ENCODE measurements at regions of chr17 and their contacts with region 1.

Region 1: DNA sequence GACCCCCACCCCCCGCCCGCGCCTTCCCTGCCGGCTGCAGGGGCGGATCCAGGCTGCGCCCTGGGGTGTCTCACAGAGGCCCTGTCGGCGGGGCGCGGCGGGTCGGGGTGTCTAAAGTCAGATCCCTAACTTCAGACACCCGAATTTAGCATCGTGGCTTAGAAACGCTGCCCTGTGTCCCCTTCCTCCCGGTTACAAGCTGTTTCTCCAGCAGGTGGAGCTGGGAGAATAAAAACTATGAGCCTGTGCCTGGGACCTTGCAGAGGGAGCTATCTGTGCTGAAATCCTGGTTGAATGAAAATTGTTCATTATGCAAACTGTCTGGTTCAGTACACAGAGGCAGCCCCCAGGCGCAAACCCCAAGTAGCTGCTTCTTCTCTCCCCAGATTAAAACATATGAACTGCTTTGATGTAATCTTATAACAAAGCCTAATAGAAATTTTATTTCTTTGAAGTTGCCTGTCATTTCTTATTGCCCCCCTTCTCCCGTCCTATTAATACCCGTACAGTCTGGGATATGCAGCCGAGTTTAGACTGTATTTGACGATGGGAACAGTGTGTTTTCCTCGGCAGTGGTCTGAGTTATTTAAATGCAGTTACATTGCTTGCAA is 79.0 kb downstream of the RPA1 start:
- DNase-seq: peak in 1 of 2 donors; percentile 73
- H3K4me3 ChIP-seq: peak overlapping the region; percentile 4 to 56
- H3K27ac ChIP-seq: no peak overlapping the region
- H3K4me1 ChIP-seq: peaks cover 6 to 13% of the 10 kb centered on the region in 2 donors
- H3K27me3 ChIP-seq: peaks cover 10% of the 10 kb centered on the region
- CTCF ChIP-seq: peak; percentile 54 to 80 (median 65)

Region 2: DNA sequence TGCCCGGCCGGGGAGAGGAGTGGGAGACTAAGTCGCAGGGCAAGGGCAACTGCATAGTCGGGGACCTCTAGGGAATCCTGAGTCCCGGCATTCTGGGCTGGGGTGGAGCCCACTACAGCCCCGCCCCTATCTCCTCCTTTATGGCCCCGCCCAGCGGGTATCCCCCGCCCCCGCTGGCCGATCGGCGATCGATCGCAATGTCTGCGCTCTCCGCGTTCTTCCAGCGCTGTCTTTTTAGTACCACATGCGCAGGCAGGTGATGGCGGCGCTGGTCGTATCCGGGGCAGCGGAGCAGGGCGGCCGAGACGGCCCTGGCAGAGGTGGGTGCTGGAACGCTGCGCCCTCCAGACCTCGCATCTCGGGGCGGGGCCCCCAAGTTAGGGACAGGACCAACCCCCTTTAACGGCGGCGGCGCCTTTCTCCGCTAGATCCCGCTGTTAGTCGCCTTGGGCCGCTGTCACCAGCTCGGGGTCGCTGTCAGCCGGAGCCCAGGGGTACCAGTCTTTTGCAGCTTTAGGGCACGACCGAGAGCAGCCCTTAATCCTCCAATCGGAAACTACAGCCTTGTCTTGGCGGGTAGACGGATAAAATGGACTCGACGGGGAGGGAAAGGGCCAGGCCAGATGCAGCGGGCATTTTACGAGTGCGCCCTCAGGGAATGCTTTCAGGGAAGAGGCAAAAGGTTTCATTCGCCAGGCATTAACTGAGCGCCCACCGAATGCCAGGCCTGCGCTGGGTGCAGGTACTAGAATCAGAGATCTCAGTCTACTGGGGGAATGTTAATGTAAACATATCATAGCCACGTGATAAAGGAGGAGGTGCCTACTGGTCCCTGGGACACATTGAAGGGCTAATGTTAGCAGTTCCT is 121.3 kb after region 1 on chr17 and contains the start of gene DPH1:
- intact Hi-C with region 1: loop called (anchors 1 kb)
- DNase-seq: peak in 1 of 2 donors; percentile 90
- H3K4me3 ChIP-seq: peak within 1 kb of the TSS; percentile 95 to 99
- H3K27ac ChIP-seq: peak within 1 kb of the TSS in 1 of 2 donors; percentile 60
- H3K4me1 ChIP-seq: peaks cover 7 to 20% of the 10 kb centered on the region in 2 donors
- H3K27me3 ChIP-seq: no peaks in the 10 kb centered on the region
- CTCF ChIP-seq: no peak
- total RNA-seq, gene DPH1: 125 TPM

Region 3: GRCh38 chr17:2041561-2042366 is 133.0 kb after region 1 on chr17 and contains the start of gene OVCA2:
- intact Hi-C with region 1: loop called (anchors 1 kb)
- DNase-seq: peak; percentile 71 to 96
- H3K4me3 ChIP-seq: peak within 1 kb of the TSS; percentile 74 to 76
- H3K27ac ChIP-seq: peak within 1 kb of the TSS; percentile 81 to 90
- H3K4me1 ChIP-seq: peaks cover 4 to 17% of the 10 kb centered on the region in 2 donors
- H3K27me3 ChIP-seq: no peaks in the 10 kb centered on the region
- CTCF ChIP-seq: peak; percentile 47 to 61 (median 60)
- total RNA-seq, gene OVCA2: 71.3 TPM

Region 4: GRCh38 chr17:2244545-2245525 is 336.0 kb after region 1 on chr17:
- intact Hi-C with region 1: loop called (anchors 10 kb)
- DNase-seq: peak; percentile 52 to 93
- H3K4me3 ChIP-seq: no peak overlapping the region
- H3K27ac ChIP-seq: peak overlapping the region; percentile 56 to 66
- H3K4me1 ChIP-seq: peaks cover 6 to 20% of the 10 kb centered on the region in 2 donors
- H3K27me3 ChIP-seq: no peaks in the 10 kb centered on the region
- CTCF ChIP-seq: peak; percentile 97 to 99 (median 98)

Measured in ascending aorta (tissue), 2 donors.